Right ventricle myocardium inferior (tissue), 1 donor: ENCODE measurements at regions of chr11 and their contacts with region 1.

Region 1: DNA sequence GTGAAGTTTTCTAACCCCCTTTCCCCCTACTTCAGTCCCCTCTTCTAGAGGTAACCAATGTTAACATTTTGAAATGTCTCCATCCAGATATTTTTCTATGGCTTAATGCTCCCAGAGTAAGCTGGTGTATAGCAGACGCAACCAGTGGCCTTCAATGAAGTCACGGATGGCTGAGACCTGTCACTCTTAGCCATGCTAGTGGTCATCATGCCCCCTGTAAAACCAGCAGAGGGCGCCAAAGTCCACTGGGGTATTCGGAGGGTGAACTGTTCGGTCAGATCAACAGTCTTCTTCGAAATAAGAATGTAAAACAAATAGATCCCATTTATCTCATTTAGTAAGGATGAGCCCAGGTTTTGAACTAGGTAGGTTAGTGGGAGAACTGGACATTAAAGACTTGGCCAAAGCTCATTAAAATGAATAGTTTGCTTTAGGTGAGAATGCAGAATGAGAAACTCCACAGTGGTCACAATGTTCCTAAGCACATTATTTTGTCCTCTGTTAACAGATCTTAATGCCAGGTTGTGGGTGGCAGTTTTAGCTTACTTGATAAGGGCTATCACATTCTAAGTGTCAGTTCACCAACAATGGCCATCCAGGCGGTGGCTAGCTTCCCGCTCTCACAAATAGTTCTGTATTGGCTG is 8.6 kb upstream of the MMP8 start:
- DNase-seq: peak; percentile 64
- ATAC-seq: no peak

Region 2: GRCh38 chr11:102940714-102941588 is 207.6 kb after region 1 on chr11:
- intact Hi-C with region 1: loop called (anchors 10 kb)
- DNase-seq: no peak
- ATAC-seq: no peak